Left cardiac atrium (tissue), 4 donors: ENCODE measurements at regions of chr1 and their contacts with region 1.

Region 1: GRCh38 chr1:182622901-182623528 is 18.8 kb upstream of the RGS16 start:
- DNase-seq: no peak
- ATAC-seq: peak; percentile 71 to 83

Region 2: DNA sequence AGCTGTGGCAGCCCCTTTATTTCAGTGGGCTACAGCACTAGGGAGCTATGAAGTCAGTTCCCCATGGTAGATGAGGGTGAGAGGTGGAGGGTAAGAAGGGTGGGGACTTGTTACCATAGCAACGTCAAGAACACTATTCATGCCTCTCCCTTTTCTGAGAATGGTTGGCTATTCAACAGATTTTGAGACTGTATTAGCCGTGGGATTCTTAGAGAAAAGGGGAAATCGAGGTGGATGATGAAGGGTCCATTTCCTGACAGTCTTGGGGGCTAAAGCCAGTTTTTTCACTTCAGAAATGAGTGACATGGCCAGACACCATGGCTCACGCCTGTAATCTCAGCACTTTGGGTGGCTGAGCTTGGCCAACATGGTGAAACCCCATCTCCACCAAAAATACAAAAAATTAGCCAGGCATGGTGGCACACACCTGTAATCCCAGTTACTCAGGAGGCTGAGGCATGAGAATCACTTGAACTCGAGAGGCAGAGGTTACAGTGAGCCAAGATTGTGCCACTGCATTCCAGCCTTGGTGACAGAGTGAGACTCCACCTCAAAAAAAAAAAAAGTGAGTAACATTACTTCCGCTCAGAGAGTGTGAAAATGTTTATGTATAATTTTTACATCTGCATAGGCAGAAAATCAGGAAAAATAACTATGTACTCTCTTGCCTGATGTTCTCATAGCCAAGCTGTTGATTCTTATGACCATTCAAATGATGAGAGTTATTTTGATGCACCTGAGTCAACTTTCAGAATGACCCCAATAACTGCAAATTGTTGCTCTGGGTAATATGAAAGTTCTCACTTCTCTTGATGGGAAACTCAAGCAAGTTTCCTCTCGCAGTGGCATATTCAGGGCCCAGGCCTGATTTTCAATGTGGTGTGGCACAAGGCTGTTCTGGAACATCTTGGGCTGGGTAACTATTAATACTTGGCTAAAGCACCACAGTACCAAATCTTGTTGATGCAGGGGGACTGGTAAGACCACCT is 196.3 kb before region 1 on chr1:
- intact Hi-C with region 1: no loop called
- DNase-seq: no peak
- ATAC-seq: no peak

Region 3: DNA sequence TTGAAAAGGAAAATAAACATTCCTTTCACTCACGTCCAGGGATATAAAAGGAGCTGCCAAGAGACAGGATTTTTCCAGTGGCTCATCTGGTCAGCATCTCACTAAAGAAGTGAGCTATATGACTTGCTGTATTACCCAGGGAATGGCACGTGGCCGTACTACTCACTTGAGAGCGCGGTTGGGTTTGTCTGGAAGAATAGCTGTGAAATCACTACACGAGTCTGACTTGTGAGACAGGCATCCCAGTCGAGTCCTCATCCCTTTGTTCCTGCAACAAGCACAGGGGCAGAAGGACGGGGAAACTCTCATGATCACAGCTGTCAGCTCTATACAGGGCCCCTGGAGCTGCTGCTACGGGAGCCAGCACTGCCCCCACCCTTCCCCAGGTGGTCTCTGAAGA is 43.7 kb after region 1 on chr1:
- intact Hi-C with region 1: loop called in 1 of 2 experiments (anchors 5 kb)
- DNase-seq: no peak
- ATAC-seq: no peak